ENCODE measurements at regions of chr3 and their contacts with region 1.

Region 1: DNA sequence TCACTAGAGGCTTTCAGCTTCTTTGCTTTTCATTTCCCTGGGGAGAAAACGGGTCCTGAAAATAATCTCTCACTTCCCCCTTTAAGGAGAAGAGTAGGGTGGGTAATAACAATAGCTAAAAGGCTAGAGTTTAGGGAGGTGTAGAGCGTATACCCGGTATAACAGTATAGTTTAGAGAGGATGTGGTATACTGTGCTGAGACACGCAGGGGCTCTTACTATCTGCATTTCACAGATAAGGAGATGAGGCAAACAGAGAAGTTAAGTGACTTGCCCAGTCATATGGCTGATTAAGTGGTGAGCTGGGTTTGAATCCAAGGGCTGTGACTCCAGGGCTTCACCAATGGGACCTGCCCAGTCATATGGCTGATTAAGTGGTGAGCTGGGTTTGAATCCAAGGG is 15.0 kb upstream of the KCNMB3 start:
- DNase-seq: peak in 2 of 3 donors; percentile 65 to 78
- H3K4me3 ChIP-seq: no peak overlapping the region
- H3K27ac ChIP-seq: no peak overlapping the region
- H3K4me1 ChIP-seq: peaks cover 0 to 14% (median 5%) of the 10 kb centered on the region in 4 experiments
- H3K27me3 ChIP-seq: no peaks in the 10 kb centered on the region

Region 2: DNA sequence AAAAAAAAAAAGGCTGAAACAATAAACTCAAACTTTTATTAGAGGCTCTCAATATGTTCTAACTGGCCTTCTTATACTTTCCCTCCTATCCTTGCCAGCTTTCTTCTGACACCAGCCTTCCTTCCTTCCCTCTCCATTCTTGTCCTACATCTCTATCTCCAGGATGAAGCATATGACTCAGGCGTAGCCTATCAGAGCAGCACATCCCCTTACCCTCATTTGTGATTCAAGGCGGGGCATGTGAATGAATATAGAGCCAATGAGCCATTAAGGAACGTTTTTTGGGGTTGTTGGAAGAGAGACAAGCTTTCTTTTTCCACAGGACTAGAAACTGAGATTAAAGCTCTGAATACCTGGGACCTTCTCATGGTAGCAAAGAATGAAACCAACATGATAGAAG is 10.1 kb after region 1 on chr3:
- CTCF ChIA-PET with region 1: interaction called, 10 read pairs
- POLR2A ChIA-PET with region 1: no interaction called
- DNase-seq: no peak
- H3K4me3 ChIP-seq: no peak overlapping the region
- H3K27ac ChIP-seq: no peak overlapping the region
- H3K4me1 ChIP-seq: no peaks in the 10 kb centered on the region
- H3K27me3 ChIP-seq: no peaks in the 10 kb centered on the region

Region 3: DNA sequence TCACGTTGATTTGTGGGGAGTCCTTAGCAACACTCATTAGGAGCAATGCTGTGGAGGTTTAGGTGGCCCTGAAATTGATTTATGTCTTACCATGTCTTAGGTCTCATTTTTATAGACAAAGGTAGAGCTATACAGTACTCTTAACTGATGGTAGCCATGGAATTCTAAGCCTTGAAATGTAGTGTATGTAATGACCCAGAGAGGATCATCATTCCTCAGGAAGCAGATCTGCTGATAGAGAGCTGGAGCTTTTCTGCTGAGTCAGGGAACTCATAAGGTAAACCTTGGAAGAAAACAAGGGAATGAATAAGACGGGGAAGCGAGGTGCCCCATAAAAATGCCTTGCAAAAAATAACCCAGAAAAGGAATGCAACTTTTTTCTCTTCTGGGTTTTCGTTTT is 23.0 kb after region 1 on chr3:
- CTCF ChIA-PET with region 1: no interaction called
- POLR2A ChIA-PET with region 1: no interaction called
- DNase-seq: no peak
- H3K4me3 ChIP-seq: no peak overlapping the region
- H3K27ac ChIP-seq: no peak overlapping the region
- H3K4me1 ChIP-seq: no peaks in the 10 kb centered on the region
- H3K27me3 ChIP-seq: no peaks in the 10 kb centered on the region